CD8-positive, alpha-beta memory T cell (primary cell): ENCODE measurements at regions of chr12 and their contacts with region 1.

Region 1: DNA sequence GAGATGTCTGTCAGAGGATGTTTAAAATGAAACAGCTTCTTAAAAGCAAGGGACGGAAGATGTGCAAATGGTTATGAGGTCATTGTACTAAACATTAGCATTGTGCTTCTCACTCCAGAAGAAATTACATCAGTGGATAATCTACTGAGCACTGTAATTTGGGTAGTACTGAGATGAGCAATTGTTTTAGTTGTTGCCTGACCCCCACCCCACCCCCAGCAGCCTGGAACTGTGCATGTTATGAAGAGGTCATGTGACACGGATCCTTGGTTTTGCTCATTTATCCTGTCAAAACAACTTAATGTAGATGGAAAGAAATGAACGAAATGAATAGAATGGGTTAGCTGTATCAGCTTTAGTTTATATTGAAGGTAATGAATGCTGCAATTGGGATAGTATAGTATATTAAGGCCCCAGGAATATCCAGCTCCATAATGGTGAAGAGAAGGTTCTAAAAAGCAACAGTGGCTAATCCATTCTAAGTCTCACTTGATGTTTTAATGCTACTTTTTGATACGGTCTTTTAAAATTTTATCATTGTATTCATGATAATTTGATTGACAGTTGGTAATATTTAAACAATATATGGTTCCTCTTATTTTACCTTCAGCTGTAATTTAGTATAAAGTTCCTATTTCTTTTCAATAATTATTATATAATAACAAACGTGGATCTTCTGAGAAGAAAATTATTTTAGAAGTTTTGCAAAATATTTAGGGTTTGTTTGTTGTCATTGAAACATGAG is 58.5 kb downstream of the WNK1 start:
- DNase-seq: no peak
- H3K4me3 ChIP-seq: no peak overlapping the region
- H3K4me3 Mint-ChIP-seq: peak overlapping the region in 6 of 7 donors; percentile 25 to 67 (median 46)
- H3K27ac ChIP-seq: no peak overlapping the region
- H3K27ac Mint-ChIP-seq: peak overlapping the region; percentile 45 to 90 (median 74)
- H3K4me1 ChIP-seq: peaks cover 58% of the 10 kb centered on the region
- H3K4me1 Mint-ChIP-seq: peaks cover 66 to 83% (median 82%) of the 10 kb centered on the region in 3 donors
- H3K27me3 ChIP-seq: no peaks in the 10 kb centered on the region
- H3K27me3 Mint-ChIP-seq: no peaks in the 10 kb centered on the region

Region 2: DNA sequence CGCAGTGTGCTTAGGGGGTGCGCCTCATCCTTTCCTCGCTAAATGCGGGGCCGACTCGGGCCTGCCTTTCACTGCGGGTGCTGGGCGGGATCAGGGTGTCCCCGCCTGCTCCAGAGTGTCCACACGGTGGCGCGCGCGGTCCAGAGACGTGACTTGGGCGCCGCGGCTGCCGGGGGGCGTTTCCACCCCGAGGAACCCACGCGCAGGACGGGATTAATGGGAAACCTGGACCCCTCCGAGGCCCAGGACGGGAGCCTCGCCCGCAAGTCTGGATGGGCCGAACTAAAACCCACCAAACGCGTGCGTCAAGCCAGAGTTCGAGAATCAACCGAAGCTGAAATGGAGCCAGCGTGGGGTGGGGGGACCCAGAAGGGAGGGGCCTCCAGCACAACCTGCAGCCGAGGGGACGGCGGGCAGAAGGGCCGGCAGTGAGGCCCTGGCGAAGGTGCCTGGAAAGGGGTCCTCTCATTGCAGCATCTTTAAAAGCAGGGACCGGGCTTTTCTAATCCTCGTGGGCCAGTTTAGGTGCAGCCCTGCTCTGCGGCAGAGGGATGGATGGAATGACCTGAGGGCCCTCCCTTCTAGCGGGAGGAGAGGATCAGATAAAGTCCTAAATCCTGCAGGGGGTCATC is 240.9 kb before region 1 on chr12:
- CTCF ChIA-PET with region 1: interaction called, 56 read pairs
- POLR2A ChIA-PET with region 1: no interaction called
- DNase-seq: peak; percentile 77 to 87 (median 85)
- H3K4me3 ChIP-seq: peak overlapping the region; percentile 65
- H3K4me3 Mint-ChIP-seq: peak overlapping the region; percentile 80 to 90 (median 82)
- H3K27ac ChIP-seq: peak overlapping the region; percentile 16
- H3K27ac Mint-ChIP-seq: peak overlapping the region in 7 of 8 donors; percentile 57 to 86 (median 63)
- H3K4me1 ChIP-seq: peaks cover 40% of the 10 kb centered on the region
- H3K4me1 Mint-ChIP-seq: peaks cover 42 to 49% (median 46%) of the 10 kb centered on the region in 3 donors
- H3K27me3 ChIP-seq: no peaks in the 10 kb centered on the region
- H3K27me3 Mint-ChIP-seq: no peaks in the 10 kb centered on the region

Region 3: GRCh38 chr12:614411-614970 is 196.4 kb before region 1 on chr12:
- CTCF ChIA-PET with region 1: interaction called, 22 read pairs
- POLR2A ChIA-PET with region 1: no interaction called
- DNase-seq: peak in 3 of 5 donors; percentile 2 to 56 (median 19)
- H3K4me3 ChIP-seq: no peak overlapping the region
- H3K4me3 Mint-ChIP-seq: no peak overlapping the region
- H3K27ac ChIP-seq: no peak overlapping the region
- H3K27ac Mint-ChIP-seq: peak overlapping the region in 1 of 8 donors; percentile 84
- H3K4me1 ChIP-seq: peaks cover 16% of the 10 kb centered on the region
- H3K4me1 Mint-ChIP-seq: peaks cover 23 to 32% (median 28%) of the 10 kb centered on the region in 3 donors
- H3K27me3 ChIP-seq: no peaks in the 10 kb centered on the region
- H3K27me3 Mint-ChIP-seq: no peaks in the 10 kb centered on the region

Region 4: DNA sequence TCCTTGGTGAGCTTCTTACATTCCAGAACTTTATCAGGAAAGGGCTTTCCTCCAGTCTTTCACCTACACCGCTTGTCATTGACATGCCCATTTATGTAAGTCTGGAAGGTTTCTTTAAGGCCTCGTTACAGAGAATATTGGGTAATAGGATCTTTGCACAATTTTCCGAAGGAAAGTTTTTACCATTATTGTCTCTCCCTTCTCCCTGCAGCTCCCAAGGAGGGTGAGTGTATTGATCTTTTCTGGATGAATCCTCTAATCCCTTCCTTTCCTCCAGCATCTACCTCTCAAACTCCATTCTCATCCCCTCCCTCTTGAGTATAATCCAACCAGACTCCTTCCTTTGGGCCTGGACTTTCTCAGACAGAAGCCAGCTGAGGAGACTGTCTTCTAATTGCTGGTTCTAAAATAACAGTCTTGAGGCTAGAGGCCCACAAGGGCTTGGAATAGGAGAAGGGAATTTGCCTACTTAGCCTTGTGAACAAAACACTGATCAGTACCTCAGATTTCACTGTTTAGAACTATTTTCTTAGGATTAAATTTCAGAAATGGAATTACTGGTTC is 36.7 kb before region 1 on chr12:
- CTCF ChIA-PET with region 1: interaction called, 15 read pairs
- POLR2A ChIA-PET with region 1: interaction called, 3 read pairs
- DNase-seq: no peak
- H3K4me3 ChIP-seq: no peak overlapping the region
- H3K4me3 Mint-ChIP-seq: peak overlapping the region in 5 of 7 donors; percentile 12 to 44 (median 34)
- H3K27ac ChIP-seq: no peak overlapping the region
- H3K27ac Mint-ChIP-seq: peak overlapping the region; percentile 66 to 88 (median 80)
- H3K4me1 ChIP-seq: peaks cover 79% of the 10 kb centered on the region
- H3K4me1 Mint-ChIP-seq: peaks cover 75 to 96% (median 95%) of the 10 kb centered on the region in 3 donors
- H3K27me3 ChIP-seq: no peaks in the 10 kb centered on the region
- H3K27me3 Mint-ChIP-seq: no peaks in the 10 kb centered on the region

Region 5: DNA sequence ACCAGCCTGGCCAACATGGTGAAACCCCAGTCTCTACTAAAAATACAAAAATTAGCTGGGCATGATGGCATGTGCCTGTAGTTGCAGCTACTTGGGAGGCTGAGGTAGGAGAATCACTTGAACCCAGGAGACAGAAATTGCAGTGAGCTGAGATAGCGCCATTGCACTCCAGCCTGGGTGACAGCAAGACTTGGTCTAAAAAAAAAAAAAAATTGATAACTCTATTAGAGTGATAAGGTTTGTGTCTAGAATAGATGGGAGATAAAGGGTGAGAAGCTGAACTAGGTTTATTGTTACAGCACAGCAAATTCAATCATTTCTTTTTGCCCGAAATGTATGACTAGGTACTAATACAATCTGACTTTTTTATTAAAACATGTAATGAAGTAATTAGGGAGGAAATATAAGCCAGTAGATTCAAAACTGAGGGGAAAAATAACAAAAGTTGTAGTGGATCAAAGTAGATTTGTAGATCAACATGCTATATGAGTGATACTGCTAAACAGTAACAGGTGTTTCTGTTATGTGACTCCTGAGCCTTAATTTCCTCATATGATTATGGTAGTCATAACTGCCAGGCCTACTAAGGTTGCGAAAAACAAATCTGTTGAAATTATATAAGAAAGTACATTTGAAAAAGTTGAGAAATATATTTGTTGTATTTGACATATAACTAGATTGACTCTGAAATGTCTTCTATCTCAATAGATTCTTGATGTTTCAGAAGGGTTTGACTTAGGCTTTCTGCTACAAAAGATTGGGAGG is 25.1 kb after region 1 on chr12:
- CTCF ChIA-PET with region 1: interaction called, 13 read pairs
- POLR2A ChIA-PET with region 1: no interaction called
- DNase-seq: no peak
- H3K4me3 ChIP-seq: no peak overlapping the region
- H3K4me3 Mint-ChIP-seq: no peak overlapping the region
- H3K27ac ChIP-seq: no peak overlapping the region
- H3K27ac Mint-ChIP-seq: peak overlapping the region in 2 of 8 donors; percentile 66 to 69
- H3K4me1 ChIP-seq: peaks cover 6% of the 10 kb centered on the region
- H3K4me1 Mint-ChIP-seq: peaks cover 56 to 68% (median 67%) of the 10 kb centered on the region in 3 donors
- H3K27me3 ChIP-seq: no peaks in the 10 kb centered on the region
- H3K27me3 Mint-ChIP-seq: no peaks in the 10 kb centered on the region